CD14-positive monocyte (primary cell): ENCODE measurements at regions of chr7 and their contacts with region 1.

Region 1: DNA sequence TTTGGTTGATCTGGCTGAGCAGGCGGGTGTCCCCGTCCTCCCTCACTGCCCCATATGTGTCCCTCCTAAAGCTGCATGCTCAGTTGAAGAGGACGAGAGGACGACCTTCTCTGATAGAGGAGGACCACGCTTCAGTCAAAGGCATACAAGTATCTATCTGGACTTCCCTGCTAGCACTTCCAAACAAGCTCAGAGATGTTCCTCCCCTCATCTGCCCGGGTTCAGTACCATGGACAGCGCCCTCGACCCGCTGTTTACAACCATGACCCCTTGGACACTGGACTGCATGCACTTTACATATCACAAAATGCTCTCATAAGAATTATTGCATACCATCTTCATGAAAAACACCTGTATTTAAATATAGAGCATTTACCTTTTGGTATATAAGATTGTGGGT is 26.9 kb upstream of the TRIM56 start:
- DNase-seq: peak; percentile 12 to 31 (median 14)
- H3K4me3 ChIP-seq: no peak overlapping the region
- H3K4me3 Mint-ChIP-seq: no peak overlapping the region
- H3K27ac ChIP-seq: no peak overlapping the region
- H3K27ac Mint-ChIP-seq: no peak overlapping the region
- H3K4me1 ChIP-seq: no peaks in the 10 kb centered on the region
- H3K4me1 Mint-ChIP-seq: no peaks in the 10 kb centered on the region
- H3K27me3 ChIP-seq: peaks cover 2 to 7% of the 10 kb centered on the region in 2 donors
- H3K27me3 Mint-ChIP-seq: peaks cover 27 to 30% (median 29%) of the 10 kb centered on the region in 3 donors
- CTCF ChIP-seq: no peak

Region 2: DNA sequence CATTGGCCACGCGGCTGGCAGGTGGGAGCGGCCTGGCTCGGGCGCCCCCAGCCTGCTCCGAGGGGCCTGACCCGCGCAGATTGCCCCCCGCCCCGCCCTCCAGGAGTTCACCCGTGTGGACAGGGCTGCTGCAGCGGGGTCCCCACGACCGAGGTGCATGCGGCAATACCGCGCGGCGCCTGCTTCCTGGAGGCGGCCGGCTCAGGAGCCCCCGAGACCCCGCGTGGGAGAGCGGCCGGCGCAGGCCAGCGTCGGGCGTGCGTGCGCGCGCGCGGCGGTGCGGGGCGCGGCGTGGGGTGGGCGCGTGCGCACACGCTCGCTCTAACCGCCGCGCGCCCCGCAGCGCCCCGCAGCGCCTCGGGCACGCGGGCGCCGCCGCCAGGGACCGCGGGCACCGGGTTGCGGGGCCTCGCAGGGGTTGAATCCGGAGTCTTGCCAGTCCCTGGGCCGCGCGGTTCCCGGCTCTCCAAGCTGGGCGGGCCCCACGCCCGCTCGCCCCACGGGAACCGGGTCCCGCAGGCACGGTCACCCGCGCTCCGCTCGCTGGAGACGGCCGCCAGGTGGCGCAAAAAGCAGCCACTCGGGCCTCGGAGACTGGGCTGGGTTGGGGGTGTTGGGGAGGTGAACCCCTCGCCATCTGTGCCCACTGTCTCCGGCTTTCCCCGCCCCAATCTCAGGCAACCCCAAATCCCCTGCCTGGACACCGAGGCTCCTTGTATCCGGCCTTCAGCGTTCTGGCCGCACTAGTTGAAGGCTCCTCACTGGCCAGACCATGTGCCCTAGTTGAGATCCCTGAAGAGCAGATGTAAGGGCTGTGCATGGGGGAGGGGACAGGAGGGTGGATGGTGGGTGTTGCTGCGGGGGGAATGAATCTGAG is 161.4 kb before region 1 on chr7:
- intact Hi-C with region 1: loop called (anchors 2 kb)
- DNase-seq: peak in 2 of 3 donors; percentile 34 to 67
- H3K4me3 ChIP-seq: peak overlapping the region in 2 of 3 experiments; percentile 2 to 68
- H3K4me3 Mint-ChIP-seq: peak overlapping the region; percentile 71 to 94
- H3K27ac ChIP-seq: no peak overlapping the region
- H3K27ac Mint-ChIP-seq: peak overlapping the region in 1 of 7 donors; percentile 84
- H3K4me1 ChIP-seq: peaks cover 14 to 20% of the 10 kb centered on the region in 2 donors
- H3K4me1 Mint-ChIP-seq: peaks cover 9% of the 10 kb centered on the region
- H3K27me3 ChIP-seq: peaks cover 14 to 69% of the 10 kb centered on the region in 2 donors
- H3K27me3 Mint-ChIP-seq: peaks cover 56 to 84% (median 65%) of the 10 kb centered on the region in 3 donors
- CTCF ChIP-seq: peak; percentile 84

Region 3: GRCh38 chr7:101031082-101031481 is 27.3 kb before region 1 on chr7:
- intact Hi-C with region 1: no loop called
- DNase-seq: no peak
- H3K4me3 ChIP-seq: no peak overlapping the region
- H3K4me3 Mint-ChIP-seq: no peak overlapping the region
- H3K27ac ChIP-seq: no peak overlapping the region
- H3K27ac Mint-ChIP-seq: no peak overlapping the region
- H3K4me1 ChIP-seq: no peaks in the 10 kb centered on the region
- H3K4me1 Mint-ChIP-seq: no peaks in the 10 kb centered on the region
- H3K27me3 ChIP-seq: peaks cover 0 to 2% of the 10 kb centered on the region in 2 donors
- H3K27me3 Mint-ChIP-seq: peaks cover 2 to 6% (median 4%) of the 10 kb centered on the region in 3 donors
- CTCF ChIP-seq: no peak